CD4-positive, alpha-beta memory T cell (primary cell): ENCODE measurements at regions of chrX and their contacts with region 1.

Region 1: GRCh38 chrX:47233337-47234113 is 716 bp downstream of the USP11 start:
- DNase-seq: peak; percentile 95 to 98 (median 96)
- H3K4me3 ChIP-seq: peak overlapping the region in 1 of 2 donors; percentile 60
- H3K4me3 Mint-ChIP-seq: peak overlapping the region; percentile 86 to 96 (median 91)
- H3K27ac ChIP-seq: peak overlapping the region; percentile 97
- H3K27ac Mint-ChIP-seq: peak overlapping the region; percentile 93 to 100 (median 98)
- H3K4me1 ChIP-seq: peaks cover 31% of the 10 kb centered on the region
- H3K4me1 Mint-ChIP-seq: peaks cover 11 to 34% (median 25%) of the 10 kb centered on the region in 4 donors
- H3K27me3 ChIP-seq: no peaks in the 10 kb centered on the region
- H3K27me3 Mint-ChIP-seq: no peaks in the 10 kb centered on the region

Region 2: DNA sequence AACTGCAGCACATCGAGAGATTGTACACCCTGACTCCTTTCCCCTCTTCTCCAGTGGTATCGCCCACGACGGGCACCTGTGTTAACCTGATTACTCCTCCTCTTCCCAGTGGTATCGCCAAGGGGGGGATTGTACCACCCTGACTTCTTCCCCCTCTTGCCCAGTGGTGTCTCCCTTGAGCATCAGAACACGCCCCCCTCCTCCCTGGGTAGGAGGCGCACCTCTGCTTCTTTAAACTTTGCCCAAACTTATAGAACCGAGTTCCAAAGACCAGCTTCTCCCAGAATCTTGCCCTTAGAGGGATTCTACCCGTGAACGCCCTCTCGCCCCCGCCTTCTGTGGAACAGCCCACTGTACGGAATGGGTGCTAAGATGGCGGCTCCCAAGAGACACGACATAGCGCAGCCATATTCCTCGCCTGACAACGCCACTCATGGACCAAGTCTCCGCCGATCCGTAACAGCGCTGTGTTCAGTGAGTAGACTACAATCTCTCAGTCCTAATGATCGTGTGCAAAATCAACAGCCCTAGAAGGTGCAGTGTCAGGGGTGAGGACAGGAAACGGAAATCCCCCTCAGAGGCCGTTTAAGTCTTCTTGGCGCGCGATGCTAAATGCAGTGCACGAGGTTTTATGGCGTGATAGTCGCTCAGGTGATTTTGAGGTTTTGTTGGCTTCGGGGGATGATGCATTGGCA is 132.7 kb after region 1 on chrX:
- CTCF ChIA-PET with region 1: no interaction called
- POLR2A ChIA-PET with region 1: no interaction called
- intact Hi-C with region 1: loop called (anchors 5 kb)
- DNase-seq: peak; percentile 71 to 86 (median 78)
- H3K4me3 ChIP-seq: peak overlapping the region; percentile 11 to 68
- H3K4me3 Mint-ChIP-seq: peak overlapping the region; percentile 84 to 97 (median 92)
- H3K27ac ChIP-seq: peak overlapping the region; percentile 57
- H3K27ac Mint-ChIP-seq: peak overlapping the region; percentile 90 to 98 (median 96)
- H3K4me1 ChIP-seq: peaks cover 10% of the 10 kb centered on the region
- H3K4me1 Mint-ChIP-seq: peaks cover 11 to 25% (median 16%) of the 10 kb centered on the region in 4 donors
- H3K27me3 ChIP-seq: no peaks in the 10 kb centered on the region
- H3K27me3 Mint-ChIP-seq: no peaks in the 10 kb centered on the region

Region 3: DNA sequence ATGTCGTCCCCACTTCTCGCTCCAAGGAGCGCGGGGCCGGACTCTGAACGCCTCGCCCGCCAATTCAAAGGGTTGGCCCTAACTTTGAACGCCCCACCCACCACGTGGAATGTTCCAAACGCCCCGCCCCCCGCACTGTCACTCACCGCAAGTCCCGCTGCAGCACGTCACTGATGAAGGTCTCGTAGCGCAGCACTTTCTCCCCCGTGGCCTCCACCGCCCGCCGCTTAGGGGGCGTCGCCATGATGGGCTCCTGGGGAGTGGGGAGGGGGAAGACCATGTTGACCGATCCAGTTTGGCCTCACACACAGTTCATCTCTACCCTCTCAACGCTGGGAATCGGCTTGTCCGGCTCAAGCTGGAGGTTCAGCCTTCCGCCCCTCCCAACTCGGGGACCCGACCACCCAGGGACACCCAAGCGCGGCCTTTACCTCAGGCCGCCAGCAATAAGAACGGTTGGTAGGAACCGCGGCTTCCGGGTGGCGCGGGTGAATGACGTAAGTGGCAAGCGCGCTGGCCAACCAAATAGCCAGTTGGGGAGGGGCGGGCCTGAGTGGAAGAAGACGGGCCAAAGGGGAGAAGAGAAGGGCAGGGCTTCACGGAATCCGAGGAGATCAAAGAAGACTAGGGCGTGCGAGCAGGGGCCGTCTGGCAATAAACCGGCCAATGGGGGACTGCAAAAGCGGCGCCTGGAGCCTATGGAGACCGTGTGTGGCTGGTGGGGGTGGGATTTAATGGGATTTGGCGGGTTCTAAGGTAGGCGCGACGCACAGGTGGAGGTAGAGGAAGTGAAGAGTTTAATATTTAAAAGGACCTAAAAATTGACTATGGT is 425.4 kb after region 1 on chrX and contains the start of gene UXT:
- CTCF ChIA-PET with region 1: no interaction called
- POLR2A ChIA-PET with region 1: no interaction called
- intact Hi-C with region 1: loop called (anchors 5 kb)
- DNase-seq: peak; percentile 89 to 96 (median 93)
- H3K4me3 ChIP-seq: peak within 1 kb of the TSS; percentile 61 to 90
- H3K4me3 Mint-ChIP-seq: peak within 1 kb of the TSS; percentile 87 to 93 (median 91)
- H3K27ac ChIP-seq: peak within 1 kb of the TSS; percentile 95
- H3K27ac Mint-ChIP-seq: peak within 1 kb of the TSS; percentile 96 to 99 (median 98)
- H3K4me1 ChIP-seq: peaks cover 16% of the 10 kb centered on the region
- H3K4me1 Mint-ChIP-seq: peaks cover 3 to 28% (median 8%) of the 10 kb centered on the region in 4 donors
- H3K27me3 ChIP-seq: no peaks in the 10 kb centered on the region
- H3K27me3 Mint-ChIP-seq: no peaks in the 10 kb centered on the region
- total RNA-seq, gene UXT: 172 to 188 TPM